Keratinocyte (primary cell): ENCODE measurements at regions of chr7 and their contacts with region 1.

Region 1: GRCh38 chr7:107874605-107875446 is 16.2 kb upstream of the DLD start:
- DNase-seq: no peak
- H3K4me3 ChIP-seq: no peak overlapping the region
- H3K27ac ChIP-seq: no peak overlapping the region
- H3K4me1 ChIP-seq: peaks cover 3% of the 10 kb centered on the region
- H3K27me3 ChIP-seq: peaks cover 3% of the 10 kb centered on the region
- CTCF ChIP-seq: peak; percentile 60 to 64 (median 61)

Region 2: GRCh38 chr7:107754642-107755041 is 120.2 kb before region 1 on chr7:
- dilution Hi-C with region 1: loop called (anchors 25 kb)
- DNase-seq: no peak
- H3K4me3 ChIP-seq: no peak overlapping the region
- H3K27ac ChIP-seq: no peak overlapping the region
- H3K4me1 ChIP-seq: no peaks in the 10 kb centered on the region
- H3K27me3 ChIP-seq: no peaks in the 10 kb centered on the region
- CTCF ChIP-seq: peak in 1 of 3 experiments; percentile 18

Region 3: GRCh38 chr7:107966711-107967110 is 91.9 kb after region 1 on chr7:
- dilution Hi-C with region 1: no loop called
- DNase-seq: no peak
- H3K4me3 ChIP-seq: no peak overlapping the region
- H3K27ac ChIP-seq: no peak overlapping the region
- H3K4me1 ChIP-seq: peaks cover 14% of the 10 kb centered on the region
- H3K27me3 ChIP-seq: no peaks in the 10 kb centered on the region
- CTCF ChIP-seq: peak in 1 of 3 experiments; percentile 27